Colonic mucosa (tissue), 4 donors: ENCODE measurements at regions of chr3 and their contacts with region 1.

Region 1: DNA sequence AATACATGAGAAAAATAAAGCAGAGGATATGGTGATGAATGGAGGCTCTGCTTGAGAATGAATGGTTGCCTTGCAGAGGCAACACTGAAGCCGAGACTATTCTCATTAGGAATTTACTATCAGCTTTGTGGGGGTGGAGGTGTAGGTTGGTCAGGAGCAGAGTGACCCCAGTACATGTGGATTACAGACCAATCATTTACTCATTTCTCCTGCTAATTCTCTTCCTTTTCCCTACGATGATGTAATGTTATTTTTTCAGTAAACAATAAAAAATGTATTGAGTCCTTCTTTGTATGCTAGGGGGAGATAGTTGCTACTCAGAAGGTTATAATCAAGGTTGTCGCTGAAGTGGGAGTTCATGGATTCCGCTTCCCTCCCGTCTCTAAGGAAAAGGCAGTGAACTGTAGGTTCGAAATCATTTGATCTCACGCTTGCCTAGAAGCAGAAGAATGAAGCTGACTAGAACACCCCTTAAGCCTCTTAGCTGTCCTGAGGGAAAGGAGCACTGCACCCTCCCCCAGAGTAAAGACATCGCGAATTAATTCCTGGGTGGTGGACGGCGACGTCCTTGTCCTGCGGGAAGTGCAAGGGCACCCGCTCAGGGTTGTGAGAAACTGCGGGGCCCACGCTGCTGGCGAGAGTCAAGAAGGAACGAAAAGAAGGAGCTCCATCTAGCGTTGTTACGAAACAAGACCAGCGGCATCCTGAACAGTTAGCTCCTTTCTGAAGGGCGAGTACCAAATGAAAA is 213.2 kb upstream of the PFN2 start:
- DNase-seq: peak; percentile 62
- H3K4me3 ChIP-seq: peak overlapping the region; percentile 5
- H3K27ac ChIP-seq: no peak overlapping the region
- H3K4me1 ChIP-seq: no peaks in the 10 kb centered on the region
- H3K27me3 ChIP-seq: no peaks in the 10 kb centered on the region
- CTCF ChIP-seq: peak; percentile 35

Region 2: DNA sequence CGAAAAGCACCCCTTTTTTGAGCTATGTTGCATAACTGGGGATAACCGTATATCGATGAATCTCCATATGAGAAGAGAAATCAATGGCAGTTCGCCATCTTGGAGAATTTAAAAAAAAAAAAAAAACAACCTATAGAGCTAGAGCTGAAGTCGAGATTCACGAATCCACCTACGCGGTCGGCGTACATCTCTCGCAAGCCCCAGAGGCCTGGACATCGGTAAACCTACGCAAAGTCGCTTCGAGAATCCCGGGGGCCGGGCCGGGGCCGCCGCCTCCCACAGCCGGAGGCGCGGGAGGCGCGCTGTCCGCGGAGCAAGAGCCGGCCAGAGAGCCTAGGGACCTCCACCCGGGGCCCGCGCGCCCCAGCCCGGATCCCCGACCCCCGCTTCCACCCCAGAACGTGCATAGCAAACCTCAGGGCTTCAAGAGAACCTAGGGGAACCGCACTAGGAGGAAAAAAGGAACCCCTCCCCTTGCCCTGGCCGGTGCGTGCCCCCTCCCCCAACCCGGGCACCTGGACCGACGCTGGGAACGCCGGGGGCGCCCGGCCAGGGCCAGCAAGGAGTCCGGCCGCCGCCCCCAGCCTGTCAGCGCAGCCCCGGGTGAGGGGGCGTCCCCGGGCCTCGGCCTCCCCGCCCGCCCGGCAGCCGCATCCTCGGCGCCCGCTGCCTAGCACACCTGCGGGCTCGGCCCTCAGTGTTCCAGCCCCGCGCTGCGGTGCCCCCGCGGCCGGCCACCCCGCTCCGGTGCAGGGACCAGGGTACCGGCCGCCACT is 213.7 kb before region 1 on chr3:
- intact Hi-C with region 1: loop called (anchors 2 kb)
- DNase-seq: peak; percentile 88
- H3K4me3 ChIP-seq: peak overlapping the region; percentile 82
- H3K27ac ChIP-seq: peak overlapping the region; percentile 81
- H3K4me1 ChIP-seq: no peaks in the 10 kb centered on the region
- H3K27me3 ChIP-seq: no peaks in the 10 kb centered on the region
- CTCF ChIP-seq: no peak

Region 3: DNA sequence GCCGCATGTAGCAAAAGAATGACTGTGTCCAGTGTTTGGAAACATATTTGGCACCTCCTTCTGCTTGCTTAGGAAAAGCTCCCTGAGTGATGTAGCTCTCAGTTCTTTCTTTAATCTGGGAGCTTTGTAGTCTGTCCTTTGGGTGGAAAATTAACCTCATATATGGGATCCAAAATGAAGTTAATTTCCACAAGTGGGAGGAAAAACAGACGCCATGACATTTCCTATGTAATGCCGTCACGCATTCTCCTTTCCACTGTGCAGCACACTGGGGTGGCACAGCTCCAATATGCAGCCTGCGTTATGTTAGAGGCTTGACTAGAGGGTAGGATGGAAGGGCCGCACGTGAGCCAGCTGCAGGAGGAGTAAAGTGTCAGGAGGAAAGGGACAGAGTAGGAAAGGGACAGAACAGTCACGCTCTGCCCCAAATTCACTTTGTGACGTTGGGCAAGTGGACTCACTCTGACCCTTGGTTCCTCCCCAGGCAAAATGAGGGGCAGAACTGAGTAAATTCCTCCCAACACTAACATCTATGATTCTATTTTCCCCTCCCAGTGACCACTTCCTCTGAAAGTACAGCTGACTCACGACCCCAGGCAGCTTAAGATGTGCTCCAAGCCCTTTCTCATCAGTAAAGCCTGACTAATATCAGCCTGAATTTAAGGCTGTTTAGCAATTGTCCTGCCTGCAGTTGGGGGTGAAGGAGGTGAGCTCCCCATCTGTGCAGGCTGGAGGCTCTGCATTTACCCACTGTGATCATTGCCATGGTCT is 36.7 kb before region 1 on chr3:
- intact Hi-C with region 1: no loop called
- DNase-seq: no peak
- H3K4me3 ChIP-seq: no peak overlapping the region
- H3K27ac ChIP-seq: no peak overlapping the region
- H3K4me1 ChIP-seq: no peaks in the 10 kb centered on the region
- H3K27me3 ChIP-seq: no peaks in the 10 kb centered on the region
- CTCF ChIP-seq: no peak